ENCODE measurements at regions of chr17 and their contacts with region 1.

Region 1: GRCh38 chr17:77869665-77870132 is 88.8 kb upstream of the TNRC6C start:
- DNase-seq: peak; percentile 70
- ATAC-seq: peak; percentile 95
- H3K4me3 Mint-ChIP-seq: peak overlapping the region; percentile 57
- H3K27ac Mint-ChIP-seq: peak overlapping the region; percentile 69
- H3K4me1 Mint-ChIP-seq: peaks cover 58% of the 10 kb centered on the region
- H3K27me3 Mint-ChIP-seq: peaks cover 3% of the 10 kb centered on the region
- CTCF ChIP-seq: no peak

Region 2: DNA sequence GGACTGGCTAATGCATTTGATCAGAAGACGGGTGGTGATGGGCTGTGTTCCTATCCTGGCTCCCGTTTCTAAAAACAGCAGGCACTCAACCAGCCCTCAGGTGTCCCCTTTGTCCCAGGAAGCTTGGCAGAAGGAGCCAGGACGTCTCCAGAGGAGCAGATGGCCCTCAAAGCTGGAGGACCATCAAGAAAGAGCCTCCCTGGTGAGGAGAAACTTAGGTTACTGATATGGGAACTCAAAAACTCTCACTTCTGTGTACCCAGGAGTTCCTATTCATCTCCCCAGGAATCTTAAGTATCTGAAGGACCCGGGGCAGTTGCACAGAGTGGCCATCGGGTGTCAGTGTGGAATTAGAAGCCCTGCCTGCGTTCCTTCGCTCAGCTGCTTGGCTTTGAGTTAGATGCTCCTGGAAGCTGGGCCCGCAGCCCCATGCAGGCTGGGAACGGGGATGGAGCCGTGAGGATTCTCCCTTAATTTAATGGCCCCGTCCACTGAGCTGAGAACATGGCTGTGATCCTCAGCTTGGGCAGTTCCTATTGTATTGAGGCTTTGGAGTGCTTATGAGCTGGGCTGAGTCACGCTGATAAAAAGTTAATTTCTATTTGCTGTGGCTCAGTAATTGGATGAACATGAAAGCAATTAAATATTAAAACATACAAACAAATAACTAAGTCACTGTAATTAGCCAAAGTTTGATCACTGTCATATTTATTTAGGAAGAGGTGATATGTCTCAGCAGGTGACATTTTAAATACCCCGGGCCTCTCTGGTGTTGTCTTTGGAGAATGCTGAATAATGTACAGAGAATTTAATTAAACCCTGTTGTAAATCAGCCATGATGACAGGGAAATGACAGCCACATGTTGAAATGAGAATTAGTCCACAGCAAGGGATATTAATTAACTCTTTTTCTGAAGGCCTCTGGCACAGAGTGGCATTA is 326.9 kb before region 1 on chr17:
- CTCF ChIA-PET with region 1: no interaction called
- POLR2A ChIA-PET with region 1: no interaction called
- intact Hi-C with region 1: no loop called
- DNase-seq: peak; percentile 35
- ATAC-seq: peak; percentile 83
- H3K4me3 Mint-ChIP-seq: no peak overlapping the region
- H3K27ac Mint-ChIP-seq: no peak overlapping the region
- H3K4me1 Mint-ChIP-seq: no peaks in the 10 kb centered on the region
- H3K27me3 Mint-ChIP-seq: peaks cover 8% of the 10 kb centered on the region
- CTCF ChIP-seq: no peak

Region 3: GRCh38 chr17:77796176-77796860 is 73.4 kb before region 1 on chr17:
- CTCF ChIA-PET with region 1: no interaction called
- POLR2A ChIA-PET with region 1: no interaction called
- intact Hi-C with region 1: loop called (anchors 10 kb)
- DNase-seq: no peak
- ATAC-seq: no peak
- H3K4me3 Mint-ChIP-seq: no peak overlapping the region
- H3K27ac Mint-ChIP-seq: no peak overlapping the region
- H3K4me1 Mint-ChIP-seq: no peaks in the 10 kb centered on the region
- H3K27me3 Mint-ChIP-seq: peaks cover 52% of the 10 kb centered on the region
- CTCF ChIP-seq: no peak

Region 4: GRCh38 chr17:77842528-77843147 is 27.1 kb before region 1 on chr17:
- CTCF ChIA-PET with region 1: no interaction called
- POLR2A ChIA-PET with region 1: interaction called, 9 read pairs
- intact Hi-C with region 1: loop called (anchors 1 kb)
- DNase-seq: no peak
- ATAC-seq: no peak
- H3K4me3 Mint-ChIP-seq: peak overlapping the region; percentile 24
- H3K27ac Mint-ChIP-seq: no peak overlapping the region
- H3K4me1 Mint-ChIP-seq: peaks cover 54% of the 10 kb centered on the region
- H3K27me3 Mint-ChIP-seq: peaks cover 61% of the 10 kb centered on the region
- CTCF ChIP-seq: no peak

Region 5: GRCh38 chr17:77881545-77881944 is 11.8 kb after region 1 on chr17:
- CTCF ChIA-PET with region 1: interaction called, 10 read pairs
- POLR2A ChIA-PET with region 1: interaction called, 85 read pairs
- intact Hi-C with region 1: loop called (anchors 1 kb)
- DNase-seq: peak; percentile 82
- ATAC-seq: peak; percentile 86
- H3K4me3 Mint-ChIP-seq: peak overlapping the region; percentile 76
- H3K27ac Mint-ChIP-seq: peak overlapping the region; percentile 86
- H3K4me1 Mint-ChIP-seq: peaks cover 82% of the 10 kb centered on the region
- H3K27me3 Mint-ChIP-seq: peaks cover 6% of the 10 kb centered on the region
- CTCF ChIP-seq: no peak

Region 6: DNA sequence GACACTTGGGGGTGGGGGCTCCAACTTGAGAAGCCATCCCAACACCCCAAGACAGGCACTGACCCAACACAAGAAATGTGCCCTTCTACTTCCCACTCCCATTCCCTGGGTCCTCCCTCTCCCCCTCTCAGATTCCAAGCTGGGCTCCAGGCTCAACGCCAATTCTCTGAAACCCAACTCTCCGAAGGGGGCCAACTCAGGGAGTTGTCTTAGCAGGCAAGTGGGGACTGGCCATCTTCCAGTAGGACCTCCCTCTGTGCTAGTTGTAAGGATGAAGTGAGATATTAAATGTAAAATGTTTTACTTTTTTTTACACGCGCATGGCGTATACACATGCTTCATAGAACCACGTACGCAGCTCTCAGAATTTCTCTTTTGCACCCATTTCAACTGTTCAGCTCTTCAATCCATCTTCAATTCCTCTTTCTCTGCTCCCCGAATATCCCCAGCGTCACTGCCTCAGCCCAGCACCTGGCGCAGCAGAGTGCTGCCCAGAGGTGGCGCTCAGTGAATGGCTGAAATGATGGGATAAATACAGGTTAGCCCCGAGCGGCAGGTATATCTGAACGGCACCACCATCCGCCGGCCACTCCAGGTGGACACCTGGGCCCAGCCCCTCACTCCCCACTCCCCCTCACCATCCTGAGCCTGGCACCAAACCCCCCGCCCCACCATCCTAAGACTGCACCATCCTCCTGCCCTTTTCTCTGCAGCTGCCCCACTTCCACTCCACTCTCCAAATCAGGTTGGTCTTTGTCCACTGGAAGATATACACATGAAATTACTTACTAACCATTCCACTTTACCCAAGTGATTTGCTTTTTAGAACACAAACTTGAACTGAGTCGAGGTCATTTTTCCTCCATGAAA is 44.9 kb after region 1 on chr17:
- CTCF ChIA-PET with region 1: no interaction called
- POLR2A ChIA-PET with region 1: interaction called, 13 read pairs
- intact Hi-C with region 1: loop called (anchors 1 kb)
- DNase-seq: no peak
- ATAC-seq: no peak
- H3K4me3 Mint-ChIP-seq: no peak overlapping the region
- H3K27ac Mint-ChIP-seq: no peak overlapping the region
- H3K4me1 Mint-ChIP-seq: peaks cover 24% of the 10 kb centered on the region
- H3K27me3 Mint-ChIP-seq: peaks cover 59% of the 10 kb centered on the region
- CTCF ChIP-seq: no peak

Region 7: DNA sequence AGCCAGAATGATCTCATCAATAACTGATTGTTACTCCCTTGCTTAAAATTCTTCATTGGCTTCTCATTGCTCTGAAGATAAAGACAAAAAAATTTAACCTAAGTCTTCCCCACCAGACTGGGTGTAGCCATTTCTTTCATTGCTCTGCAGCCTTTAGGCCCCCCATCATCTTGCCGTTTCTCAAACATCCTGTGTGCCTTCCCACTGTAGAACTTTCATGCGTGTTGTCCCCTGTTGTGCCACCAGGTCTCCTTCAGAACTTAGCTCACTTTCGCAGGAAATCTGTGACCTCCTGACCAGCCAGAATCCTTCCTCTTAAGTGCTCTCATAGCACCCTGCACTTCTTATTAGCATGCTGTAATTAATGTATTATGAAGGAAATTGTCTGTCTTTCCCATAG is 120.6 kb after region 1 on chr17:
- CTCF ChIA-PET with region 1: no interaction called
- POLR2A ChIA-PET with region 1: no interaction called
- intact Hi-C with region 1: no loop called
- DNase-seq: no peak
- ATAC-seq: no peak
- H3K4me3 Mint-ChIP-seq: no peak overlapping the region
- H3K27ac Mint-ChIP-seq: no peak overlapping the region
- H3K4me1 Mint-ChIP-seq: peaks cover 6% of the 10 kb centered on the region
- H3K27me3 Mint-ChIP-seq: no peaks in the 10 kb centered on the region
- CTCF ChIP-seq: no peak

Region 8: DNA sequence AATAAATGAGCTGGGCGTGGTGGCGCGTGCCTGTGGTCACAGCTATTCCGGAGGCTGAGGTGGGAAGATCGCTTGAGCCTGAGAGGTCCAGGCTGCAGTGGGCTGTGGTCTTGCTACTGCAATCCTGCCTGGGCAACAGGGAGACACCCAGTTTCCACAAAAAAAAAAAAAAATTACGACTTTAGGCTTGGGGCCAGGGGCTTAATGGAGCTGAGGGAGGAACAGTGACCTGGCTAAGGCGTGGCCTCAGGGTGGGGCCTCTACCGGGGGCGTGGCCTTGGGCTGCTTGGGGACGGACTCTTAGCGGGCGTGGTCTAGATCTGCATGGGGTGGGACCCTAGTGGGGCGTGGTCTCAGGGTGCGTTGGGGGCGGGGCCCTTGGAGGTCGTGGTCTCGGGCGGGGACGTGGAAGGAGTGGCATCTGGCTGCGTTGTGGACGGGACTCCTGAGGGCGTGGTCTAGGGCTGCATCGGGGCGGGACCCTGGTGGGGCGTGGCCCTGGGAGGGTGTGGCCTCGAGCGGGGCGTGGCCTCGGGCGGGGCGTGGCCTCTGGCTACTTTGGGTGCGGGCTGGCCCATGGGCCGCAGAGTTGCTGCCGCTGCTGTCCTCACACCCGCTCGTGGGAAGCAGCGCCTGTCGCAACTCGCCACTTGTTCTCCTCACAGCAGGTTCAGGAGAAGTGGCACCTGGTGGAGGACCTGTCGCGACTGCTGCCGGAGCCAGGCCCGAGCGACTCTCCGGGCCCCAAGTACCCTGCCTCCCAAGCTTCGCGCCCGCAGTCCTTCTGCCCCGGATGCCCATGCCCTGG is 270.7 kb after region 1 on chr17:
- CTCF ChIA-PET with region 1: no interaction called
- POLR2A ChIA-PET with region 1: no interaction called
- intact Hi-C with region 1: no loop called
- DNase-seq: peak; percentile 95
- ATAC-seq: peak; percentile 91
- H3K4me3 Mint-ChIP-seq: peak overlapping the region; percentile 58
- H3K27ac Mint-ChIP-seq: peak overlapping the region; percentile 80
- H3K4me1 Mint-ChIP-seq: peaks cover 90% of the 10 kb centered on the region
- H3K27me3 Mint-ChIP-seq: no peaks in the 10 kb centered on the region
- CTCF ChIP-seq: no peak

Measured in activated B cell treated with CpG ODN at 0.5 μM for 24 hours (primary cell).